CD14-positive monocyte (primary cell): ENCODE measurements at regions of chr1 and their contacts with region 1.

Region 1: DNA sequence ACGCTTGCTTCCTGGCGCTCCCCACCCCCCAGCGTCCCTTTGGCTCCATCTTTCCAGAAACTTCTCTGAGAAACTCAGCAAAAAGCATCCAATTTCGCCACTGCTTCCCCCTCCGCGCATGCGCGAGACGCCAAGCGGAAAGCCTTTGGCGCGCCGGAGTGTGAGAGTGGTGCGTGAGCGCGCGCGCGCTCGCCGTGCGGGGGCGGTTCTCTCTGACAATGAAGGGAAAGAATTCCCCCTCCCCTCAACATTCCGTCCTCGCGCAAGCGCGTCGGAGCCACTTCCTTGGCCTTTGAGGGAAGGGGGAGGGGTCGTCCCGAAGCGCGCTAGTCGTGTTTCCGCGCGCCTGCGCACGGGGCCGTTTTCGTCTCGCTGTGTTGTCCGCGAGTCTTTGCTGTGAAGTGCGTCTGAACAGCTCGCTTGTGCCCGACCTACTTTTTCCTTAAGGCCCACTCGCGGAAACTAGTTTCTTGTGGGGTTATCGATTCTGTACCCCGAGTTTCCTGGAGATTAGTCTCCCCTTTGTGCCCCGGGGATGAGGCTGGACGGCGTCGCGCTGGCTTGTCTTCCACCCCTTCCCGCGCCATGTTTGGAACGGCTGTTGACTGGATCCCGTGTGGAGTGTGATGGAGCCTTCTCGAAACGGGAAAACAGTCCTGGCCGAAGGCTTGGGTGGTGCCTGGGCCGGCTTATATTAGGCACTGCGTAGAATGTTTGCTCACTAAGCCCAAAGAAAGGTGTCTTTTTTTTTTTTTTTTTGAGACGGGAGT is 11.6 kb upstream of the SPEN start:
- DNase-seq: peak; percentile 99 to 100 (median 100)
- H3K4me3 ChIP-seq: peak overlapping the region; percentile 84 to 98 (median 96)
- H3K4me3 Mint-ChIP-seq: peak overlapping the region; percentile 94
- H3K27ac ChIP-seq: peak overlapping the region; percentile 98 to 99
- H3K27ac Mint-ChIP-seq: peak overlapping the region; percentile 97 to 99 (median 98)
- H3K4me1 ChIP-seq: peaks cover 51 to 62% of the 10 kb centered on the region in 2 donors
- H3K4me1 Mint-ChIP-seq: peaks cover 42% of the 10 kb centered on the region
- H3K27me3 ChIP-seq: no peaks in the 10 kb centered on the region
- H3K27me3 Mint-ChIP-seq: no peaks in the 10 kb centered on the region
- CTCF ChIP-seq: no peak

Region 2: GRCh38 chr1:15847100-15847892 is 11.4 kb after region 1 on chr1 and contains the start of gene SPEN:
- intact Hi-C with region 1: loop called (anchors 1 to 2 kb)
- DNase-seq: peak; percentile 97 to 98 (median 97)
- H3K4me3 ChIP-seq: peak within 1 kb of the TSS; percentile 67 to 99 (median 97)
- H3K4me3 Mint-ChIP-seq: peak within 1 kb of the TSS; percentile 99 to 100
- H3K27ac ChIP-seq: peak within 1 kb of the TSS; percentile 95 to 98
- H3K27ac Mint-ChIP-seq: peak within 1 kb of the TSS; percentile 96 to 99 (median 98)
- H3K4me1 ChIP-seq: peaks cover 35 to 43% of the 10 kb centered on the region in 2 donors
- H3K4me1 Mint-ChIP-seq: peaks cover 43% of the 10 kb centered on the region
- H3K27me3 ChIP-seq: no peaks in the 10 kb centered on the region
- H3K27me3 Mint-ChIP-seq: no peaks in the 10 kb centered on the region
- CTCF ChIP-seq: no peak
- polyA plus RNA-seq, gene SPEN: 3.1 to 30.9 (median 6.1) TPM

Region 3: DNA sequence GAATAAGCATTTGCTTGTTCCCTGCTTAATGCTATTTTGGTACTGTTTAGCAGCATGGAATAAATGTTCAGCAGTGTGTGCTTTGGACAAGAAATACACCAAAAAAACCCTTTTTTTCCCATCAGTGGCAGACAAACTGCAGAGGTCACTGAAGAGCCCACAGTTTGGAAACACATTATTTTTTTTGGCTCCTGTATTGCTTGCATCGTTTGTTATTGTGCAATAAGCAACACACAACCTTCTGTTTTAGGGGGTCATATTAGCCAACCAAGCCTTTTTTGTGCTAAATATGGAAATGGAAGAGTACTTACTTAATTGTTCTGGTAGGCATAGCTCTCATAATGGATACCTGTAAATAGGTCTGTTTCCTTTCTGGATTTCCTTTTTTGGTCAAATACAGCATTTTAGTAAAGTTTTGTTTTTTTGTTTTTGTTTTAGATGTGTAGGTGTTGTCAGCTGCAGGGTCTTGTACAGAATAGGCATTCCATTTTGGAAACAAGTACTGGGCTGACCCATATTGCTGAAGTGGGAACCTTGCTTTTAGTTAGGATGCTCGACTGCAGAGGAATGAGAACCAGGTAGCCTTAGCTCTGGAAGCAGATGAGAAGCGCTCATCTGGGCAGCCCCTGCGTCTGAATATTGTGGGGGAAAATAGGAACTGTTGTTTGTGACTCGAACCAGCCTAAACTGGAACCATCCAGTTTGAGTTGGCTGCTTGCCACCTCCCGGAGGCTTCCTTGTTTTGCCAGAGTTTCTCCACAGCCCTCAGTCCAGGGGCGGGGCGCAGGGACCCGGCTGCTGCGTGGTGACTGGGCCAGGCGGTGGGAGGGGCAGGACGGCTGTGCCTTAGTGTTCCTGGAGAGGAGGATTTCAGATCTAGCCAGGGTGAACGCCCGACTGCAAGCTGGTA is 50.0 kb after region 1 on chr1:
- intact Hi-C with region 1: loop called in 1 of 2 experiments (anchors 5 kb)
- DNase-seq: peak; percentile 91 to 97 (median 96)
- H3K4me3 ChIP-seq: peak overlapping the region; percentile 57 to 86 (median 83)
- H3K4me3 Mint-ChIP-seq: peak overlapping the region; percentile 82 to 90
- H3K27ac ChIP-seq: peak overlapping the region; percentile 80 to 97
- H3K27ac Mint-ChIP-seq: peak overlapping the region; percentile 95 to 98 (median 97)
- H3K4me1 ChIP-seq: peaks cover 42 to 55% of the 10 kb centered on the region in 2 donors
- H3K4me1 Mint-ChIP-seq: peaks cover 59% of the 10 kb centered on the region
- H3K27me3 ChIP-seq: no peaks in the 10 kb centered on the region
- H3K27me3 Mint-ChIP-seq: peaks cover 0 to 1% (median 0%) of the 10 kb centered on the region in 3 donors
- CTCF ChIP-seq: peak; percentile 12